ENCODE measurements at regions of chr12 and their contacts with region 1.

Region 1: GRCh38 chr12:12983420-12984035 is 16.5 kb downstream of the HEBP1 start:
- DNase-seq: no peak
- ATAC-seq: peak; percentile 41 to 70

Region 2: GRCh38 chr12:12837025-12837872 is 146.3 kb before region 1 on chr12:
- intact Hi-C with region 1: loop called in 1 of 2 experiments (anchors 5 kb)
- DNase-seq: peak; percentile 36
- ATAC-seq: peak; percentile 65 to 92